Endothelial cell of umbilical vein (primary cell): ENCODE measurements at regions of chr12 and their contacts with region 1.

Region 1: DNA sequence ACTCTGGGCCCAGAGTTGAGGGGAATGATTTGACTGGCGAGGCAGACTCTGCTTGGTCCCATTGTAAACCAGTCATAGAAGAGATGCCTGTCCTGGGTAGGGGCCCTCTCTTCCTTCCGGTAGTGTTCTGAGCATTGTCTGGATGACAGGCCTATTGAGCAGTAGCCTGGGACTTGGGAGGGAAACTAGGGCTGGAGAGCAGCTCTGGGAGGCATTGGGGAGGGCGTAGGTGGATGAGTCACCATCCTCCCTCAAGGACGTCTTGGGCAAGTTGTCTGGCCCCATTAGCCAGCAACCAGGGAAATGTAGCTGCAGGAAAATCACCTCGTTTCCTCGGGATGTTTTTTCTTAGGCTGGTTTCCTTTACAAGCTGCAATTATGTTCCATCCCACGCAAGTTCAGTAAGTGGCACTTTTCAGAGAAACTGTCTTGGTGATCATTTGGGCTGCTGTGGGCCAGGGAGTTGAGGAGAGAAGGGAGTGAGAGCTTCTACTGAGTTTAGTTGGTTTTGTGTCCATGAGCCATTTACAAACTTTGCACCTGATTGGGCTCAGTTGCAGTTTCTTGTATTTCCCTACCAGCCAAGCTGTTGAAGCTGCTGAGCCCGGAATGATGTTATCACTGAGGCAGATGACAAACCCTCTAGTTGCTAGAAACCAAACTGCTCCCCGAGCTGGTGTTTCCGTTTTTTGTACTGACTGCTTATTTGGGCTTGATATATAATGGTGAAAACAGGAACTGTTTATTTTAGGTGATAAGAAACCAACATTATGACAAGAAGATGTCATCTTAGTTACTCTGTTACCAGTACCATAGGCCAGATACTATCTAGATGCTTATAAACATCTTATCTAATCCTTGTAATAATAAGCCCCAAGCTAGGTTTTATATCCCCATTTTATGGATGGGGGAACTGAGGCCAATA is 147.6 kb downstream of the CHST11 start:
- DNase-seq: peak; percentile 98
- H3K4me3 ChIP-seq: peak overlapping the region in 1 of 3 experiments; percentile 38
- H3K27ac ChIP-seq: peak overlapping the region; percentile 89
- H3K4me1 ChIP-seq: peaks cover 35% of the 10 kb centered on the region
- H3K27me3 ChIP-seq: no peaks in the 10 kb centered on the region
- CTCF ChIP-seq: no peak
- POLR2A ChIP-seq: peak; percentile 30

Region 2: DNA sequence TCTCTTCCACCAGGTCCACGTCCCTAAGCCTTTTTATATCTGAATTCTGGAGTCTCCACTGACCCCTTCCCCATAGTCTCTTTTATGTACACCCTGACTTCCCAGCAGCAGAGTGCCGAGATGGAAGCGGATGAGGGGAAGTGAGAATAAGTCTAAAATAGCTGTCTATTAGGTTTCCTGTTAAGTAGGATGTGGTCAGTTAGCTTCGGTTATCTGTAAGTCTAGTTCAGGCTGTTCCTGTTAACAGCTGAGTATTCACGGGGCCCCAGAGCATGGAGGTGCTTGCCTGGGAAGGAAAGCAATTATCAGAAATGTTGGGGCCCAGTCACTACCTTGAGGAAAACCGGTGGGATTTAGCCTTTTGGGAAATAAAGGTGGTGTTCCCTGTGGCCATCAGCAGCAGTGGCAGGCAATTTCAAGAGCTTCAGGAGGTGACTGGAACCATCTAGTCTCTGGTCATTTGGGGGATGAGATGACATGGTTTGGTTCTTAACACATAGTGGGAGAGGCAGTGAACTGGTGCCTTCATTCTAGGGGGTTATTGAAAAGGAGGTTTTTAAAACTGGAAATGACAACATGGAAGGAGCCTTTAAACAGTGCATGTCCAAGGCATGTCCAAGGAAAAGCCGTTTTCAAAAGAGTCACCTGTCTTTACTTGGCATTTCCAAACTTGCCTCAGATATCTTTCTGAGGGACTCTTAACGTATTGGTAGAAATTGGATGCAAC is 125.8 kb before region 1 on chr12:
- CTCF ChIA-PET with region 1: no interaction called
- POLR2A ChIA-PET with region 1: no interaction called
- dilution Hi-C with region 1: no loop called
- intact Hi-C with region 1: loop called (anchors 2 kb)
- DNase-seq: peak; percentile 39
- H3K4me3 ChIP-seq: peak overlapping the region in 1 of 3 experiments; percentile 23
- H3K27ac ChIP-seq: peak overlapping the region; percentile 54
- H3K4me1 ChIP-seq: peaks cover 39% of the 10 kb centered on the region
- H3K27me3 ChIP-seq: no peaks in the 10 kb centered on the region
- CTCF ChIP-seq: no peak
- POLR2A ChIP-seq: no peak